PC-9 (cell line): ENCODE measurements at regions of chr14 and their contacts with region 1.

Region 1: DNA sequence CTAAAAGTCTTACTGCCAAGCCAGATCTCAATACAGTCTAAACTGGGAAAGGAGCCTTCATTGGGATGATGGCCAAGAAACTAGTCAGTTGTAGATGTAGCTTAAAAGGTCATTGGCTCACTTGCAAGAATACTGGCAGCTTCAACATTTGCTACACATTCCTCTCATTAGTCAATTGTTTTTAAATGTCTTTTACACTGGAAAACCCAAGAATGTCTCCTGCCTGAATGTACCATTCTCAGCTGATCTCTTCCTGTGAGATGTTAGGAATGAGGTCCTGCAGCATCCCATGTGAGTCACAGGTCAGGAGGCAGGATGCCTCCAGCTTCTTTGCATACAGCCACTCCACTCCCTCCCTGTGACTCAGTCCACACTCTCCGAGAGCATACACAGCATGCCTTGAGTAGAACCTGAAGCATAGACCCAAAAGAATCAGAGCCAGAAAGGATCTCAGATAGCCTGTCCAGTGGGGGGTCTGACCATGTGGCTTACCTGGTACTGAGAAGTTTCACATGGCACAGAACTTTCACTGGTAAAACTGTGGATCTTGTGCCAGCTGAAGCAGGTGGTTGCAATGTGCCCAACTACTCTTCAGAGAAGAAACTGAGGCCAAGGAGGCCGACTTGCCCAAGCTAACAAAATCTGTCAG is 56.0 kb upstream of the HECTD1 start:
- DNase-seq: peak; percentile 77 to 97
- H3K4me3 ChIP-seq: no peak overlapping the region
- H3K27ac ChIP-seq: peak overlapping the region; percentile 83
- H3K4me1 ChIP-seq: peaks cover 53% of the 10 kb centered on the region
- H3K27me3 ChIP-seq: no peaks in the 10 kb centered on the region
- CTCF ChIP-seq: no peak

Region 2: GRCh38 chr14:31207755-31208545 is 55.7 kb before region 1 on chr14 and contains the start of gene HECTD1:
- CTCF ChIA-PET with region 1: no interaction called
- POLR2A ChIA-PET with region 1: no interaction called
- intact Hi-C with region 1: loop called (anchors 2 kb)
- DNase-seq: peak; percentile 61 to 86
- H3K4me3 ChIP-seq: peak within 1 kb of the TSS; percentile 82
- H3K27ac ChIP-seq: peak within 1 kb of the TSS; percentile 87
- H3K4me1 ChIP-seq: peaks cover 28% of the 10 kb centered on the region
- H3K27me3 ChIP-seq: no peaks in the 10 kb centered on the region
- CTCF ChIP-seq: peak; percentile 36; the same call in 1 of the 2 replicates
- total RNA-seq, gene HECTD1: 93.9 and 94.4 TPM in 2 replicates

Region 3: DNA sequence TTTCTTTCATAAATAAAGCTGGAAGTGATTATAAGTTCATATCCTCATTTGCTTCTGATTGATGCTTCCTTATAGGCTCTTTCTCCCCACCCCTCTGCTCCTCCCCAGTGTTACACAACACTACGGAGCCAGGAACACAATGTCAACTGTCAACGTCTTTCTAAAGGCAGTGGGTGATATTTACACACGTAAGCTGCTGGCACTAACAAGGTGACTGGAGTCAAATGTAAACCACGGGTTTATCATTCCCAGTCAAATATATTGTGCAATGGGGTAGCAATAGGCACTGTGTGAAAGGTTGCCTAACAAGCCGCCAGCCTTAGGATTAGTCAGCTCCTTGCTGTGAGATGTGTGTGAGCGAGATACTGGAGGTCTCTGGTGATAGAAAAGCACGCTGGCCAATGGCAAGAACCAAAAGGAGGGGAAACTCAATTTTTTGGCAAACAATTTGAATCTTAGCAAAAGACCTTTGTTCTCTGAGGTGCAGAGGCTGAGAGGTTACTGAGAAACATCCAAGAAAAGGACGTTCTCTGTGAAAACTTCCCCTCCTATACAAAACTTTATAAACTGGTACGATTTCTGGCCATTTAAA is 33.9 kb before region 1 on chr14:
- CTCF ChIA-PET with region 1: no interaction called
- POLR2A ChIA-PET with region 1: interaction called, 3 read pairs
- intact Hi-C with region 1: loop called (anchors 5 kb)
- DNase-seq: peak; percentile 67 to 98
- H3K4me3 ChIP-seq: no peak overlapping the region; the same call in 1 of the 2 replicates
- H3K27ac ChIP-seq: peak overlapping the region; percentile 86
- H3K4me1 ChIP-seq: peaks cover 33% of the 10 kb centered on the region
- H3K27me3 ChIP-seq: no peaks in the 10 kb centered on the region
- CTCF ChIP-seq: no peak

Region 4: DNA sequence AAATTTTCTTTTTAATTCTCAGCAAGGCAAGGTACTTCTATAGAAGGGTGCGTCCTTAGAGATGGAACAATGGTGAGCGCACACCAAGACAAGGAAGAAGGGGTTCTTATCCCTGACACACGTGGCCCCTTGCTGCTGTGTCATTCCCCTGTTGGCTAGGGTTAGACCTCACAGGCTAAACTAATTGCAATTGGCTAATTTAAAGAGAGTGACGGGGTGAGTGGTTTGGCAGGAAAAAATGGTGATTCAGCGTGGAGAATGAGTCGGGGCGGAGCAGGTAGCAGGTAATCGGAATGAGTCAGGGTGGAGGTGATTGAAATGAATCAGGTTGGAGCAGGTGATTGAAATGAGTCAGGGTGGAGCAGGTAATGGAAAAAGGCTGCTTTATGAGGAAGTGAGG is 19.7 kb before region 1 on chr14:
- CTCF ChIA-PET with region 1: no interaction called
- POLR2A ChIA-PET with region 1: no interaction called
- intact Hi-C with region 1: loop called (anchors 2 kb)
- DNase-seq: peak; percentile 75 to 94
- H3K4me3 ChIP-seq: peak overlapping the region; percentile 31; the same call in 1 of the 2 replicates
- H3K27ac ChIP-seq: peak overlapping the region; percentile 97
- H3K4me1 ChIP-seq: peaks cover 18% of the 10 kb centered on the region
- H3K27me3 ChIP-seq: no peaks in the 10 kb centered on the region
- CTCF ChIP-seq: no peak

Region 5: DNA sequence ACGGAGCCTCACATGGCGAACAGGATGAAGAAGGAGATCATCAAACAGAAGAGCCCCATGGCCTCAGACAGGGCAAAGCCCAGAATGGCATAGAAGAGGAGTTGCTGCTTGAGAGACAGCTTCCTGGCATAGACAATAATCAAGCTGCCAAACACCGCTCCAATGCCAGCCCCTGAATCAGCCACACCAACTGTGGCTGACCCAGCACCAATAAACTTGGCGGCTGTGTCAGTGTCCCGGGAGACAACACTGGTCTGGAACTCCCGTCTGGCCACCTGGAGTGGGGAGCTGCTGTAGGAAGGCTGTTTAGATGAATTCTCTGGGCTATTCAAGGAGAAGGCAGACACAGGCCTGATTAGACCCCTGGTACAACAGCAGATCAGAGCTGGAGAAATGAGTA is 56.6 kb after region 1 on chr14:
- CTCF ChIA-PET with region 1: no interaction called
- POLR2A ChIA-PET with region 1: no interaction called
- intact Hi-C with region 1: no loop called
- DNase-seq: no peak
- H3K4me3 ChIP-seq: no peak overlapping the region
- H3K27ac ChIP-seq: no peak overlapping the region
- H3K4me1 ChIP-seq: no peaks in the 10 kb centered on the region
- H3K27me3 ChIP-seq: no peaks in the 10 kb centered on the region
- CTCF ChIP-seq: no peak